Adrenal gland (tissue), 19 donors: ENCODE measurements at regions of chr1 and their contacts with region 1.

Region 1: DNA sequence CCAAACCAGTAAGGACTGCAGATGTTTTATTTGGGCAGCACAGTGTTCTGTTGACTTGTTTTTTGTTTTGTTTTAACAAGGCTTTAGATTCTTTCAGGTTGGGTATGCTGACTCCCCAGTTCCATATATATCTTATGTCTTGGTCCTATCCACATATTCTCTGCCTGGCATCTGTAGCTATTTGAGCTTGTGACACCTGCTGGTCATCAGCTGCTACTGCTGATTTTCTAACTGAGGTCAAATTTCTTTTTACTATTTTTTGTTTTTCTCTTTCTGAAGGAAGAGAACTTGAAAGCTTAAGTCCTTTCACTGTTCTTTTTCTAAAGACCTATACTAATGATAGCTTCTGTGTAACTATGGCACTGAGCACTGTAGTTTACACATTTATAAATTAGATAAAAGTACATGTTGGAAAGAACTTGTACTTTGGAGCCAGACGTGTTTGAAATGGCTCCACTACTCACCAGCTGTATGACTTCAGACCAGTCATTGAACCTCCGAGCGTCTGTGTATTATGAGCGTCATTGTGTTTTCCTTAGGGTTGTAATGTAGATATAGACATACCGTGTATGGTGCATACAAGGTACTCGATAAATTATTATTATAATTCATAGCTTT is 109.4 kb downstream of the NRDC start:
- DNase-seq: peak in 5 of 7 donors; percentile 24 to 70 (median 42)
- H3K4me3 ChIP-seq: no peak overlapping the region
- H3K27ac ChIP-seq: no peak overlapping the region
- H3K4me1 ChIP-seq: no peaks in the 10 kb centered on the region
- H3K27me3 ChIP-seq: no peaks in the 10 kb centered on the region
- CTCF ChIP-seq: peak; percentile 77 to 90 (median 82)
- POLR2A ChIP-seq: no peak

Region 2: GRCh38 chr1:51627678-51628077 is 141.4 kb before region 1 on chr1:
- intact Hi-C with region 1: loop called in 1 of 2 experiments (anchors 5 kb)
- DNase-seq: no peak
- H3K4me3 ChIP-seq: no peak overlapping the region
- H3K27ac ChIP-seq: no peak overlapping the region
- H3K4me1 ChIP-seq: peaks cover 0 to 40% of the 10 kb centered on the region in 2 donors
- H3K27me3 ChIP-seq: no peaks in the 10 kb centered on the region
- CTCF ChIP-seq: peak in 5 of 6 experiments; percentile 36 to 61 (median 51)
- POLR2A ChIP-seq: no peak

Region 3: DNA sequence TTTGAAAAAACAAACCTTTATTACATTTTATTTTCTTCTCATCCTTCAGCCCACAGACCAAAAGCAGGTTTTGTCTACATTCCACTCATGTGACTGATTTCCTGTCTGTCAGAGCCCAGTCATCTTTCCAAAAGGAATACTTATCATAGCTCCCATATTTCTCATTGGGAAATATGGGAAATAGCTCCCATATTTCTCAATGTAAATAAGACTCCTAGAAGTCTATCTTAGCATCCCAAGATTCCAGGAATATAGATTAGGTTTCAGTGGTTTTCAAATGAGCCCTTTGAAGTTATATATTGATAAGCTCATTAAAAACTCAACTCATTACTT is 128.6 kb after region 1 on chr1:
- intact Hi-C with region 1: no loop called
- DNase-seq: no peak
- H3K4me3 ChIP-seq: no peak overlapping the region
- H3K27ac ChIP-seq: no peak overlapping the region
- H3K4me1 ChIP-seq: no peaks in the 10 kb centered on the region
- H3K27me3 ChIP-seq: peaks cover 3% of the 10 kb centered on the region
- CTCF ChIP-seq: no peak
- POLR2A ChIP-seq: no peak